ENCODE measurements at regions of chr1 and their contacts with region 1.

Region 1: GRCh38 chr1:21782868-21783678 is at the start of gene USP48:
- DNase-seq: peak; percentile 96 to 98
- H3K4me3 ChIP-seq: peak within 1 kb of the TSS; percentile 91
- H3K4me3 Mint-ChIP-seq: peak within 1 kb of the TSS; percentile 86
- H3K27ac Mint-ChIP-seq: peak within 1 kb of the TSS; percentile 98
- H3K4me1 ChIP-seq: no peaks in the 10 kb centered on the region
- H3K4me1 Mint-ChIP-seq: no peaks in the 10 kb centered on the region
- H3K27me3 ChIP-seq: no peaks in the 10 kb centered on the region
- H3K27me3 Mint-ChIP-seq: no peaks in the 10 kb centered on the region
- CTCF ChIP-seq: no peak
- total RNA-seq, gene USP48: 49.1 and 52.0 TPM in 2 replicates

Region 2: DNA sequence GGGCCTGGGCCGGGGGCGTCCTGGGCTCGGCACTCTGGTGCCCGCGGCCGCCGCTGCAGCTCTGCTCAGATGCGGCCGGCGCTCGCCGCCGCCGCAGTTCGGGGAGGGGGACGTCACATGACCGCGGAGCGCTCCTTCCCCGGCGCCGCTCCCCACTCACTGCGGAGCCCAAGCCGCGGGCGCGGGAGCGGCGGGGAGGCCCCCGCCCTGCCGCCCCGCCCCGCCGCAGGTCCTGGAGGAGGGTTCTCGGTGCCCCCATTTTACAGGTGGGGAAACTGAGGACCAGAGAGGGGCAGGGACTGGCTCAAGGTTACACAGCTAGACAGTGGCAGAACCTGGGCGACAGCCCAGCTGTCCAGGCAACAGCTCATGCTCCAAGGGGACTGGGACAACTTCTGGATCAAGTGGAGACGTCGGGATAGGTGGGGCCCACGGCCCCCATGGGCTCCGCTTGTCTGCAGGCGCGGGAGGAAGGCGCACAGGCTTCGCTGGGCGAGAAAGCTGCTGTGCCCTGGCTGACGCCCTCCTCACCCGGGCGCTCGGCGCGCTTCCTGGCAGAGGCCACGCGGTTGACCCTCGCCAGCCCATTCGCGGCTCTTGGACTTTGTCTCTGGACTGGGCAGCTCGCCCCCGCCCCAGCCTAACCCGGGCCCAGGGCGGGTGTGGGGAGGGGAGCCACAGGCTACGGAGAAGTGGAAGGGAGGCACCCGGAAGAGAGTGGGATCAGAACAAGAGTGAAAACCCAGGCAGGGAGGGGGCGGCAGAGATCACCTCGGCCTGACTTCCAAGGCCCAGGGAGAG is 113.6 kb before region 1 on chr1 and contains the start of gene RAP1GAP:
- CTCF ChIA-PET with region 1: no interaction called
- POLR2A ChIA-PET with region 1: interaction called, 4 read pairs
- intact Hi-C with region 1: loop called (anchors 10 kb)
- DNase-seq: peak; percentile 86 to 88
- H3K4me3 ChIP-seq: peak within 1 kb of the TSS; percentile 60
- H3K4me3 Mint-ChIP-seq: peak within 1 kb of the TSS; percentile 77
- H3K27ac Mint-ChIP-seq: peak within 1 kb of the TSS; percentile 50
- H3K4me1 ChIP-seq: peaks cover 9% of the 10 kb centered on the region; the same call in 1 of the 2 replicates
- H3K4me1 Mint-ChIP-seq: no peaks in the 10 kb centered on the region
- H3K27me3 ChIP-seq: no peaks in the 10 kb centered on the region
- H3K27me3 Mint-ChIP-seq: no peaks in the 10 kb centered on the region
- CTCF ChIP-seq: peak in 1 of 2 experiments; percentile 44
- total RNA-seq, gene RAP1GAP: 7.2 and 9.3 TPM in 2 replicates

Region 3: DNA sequence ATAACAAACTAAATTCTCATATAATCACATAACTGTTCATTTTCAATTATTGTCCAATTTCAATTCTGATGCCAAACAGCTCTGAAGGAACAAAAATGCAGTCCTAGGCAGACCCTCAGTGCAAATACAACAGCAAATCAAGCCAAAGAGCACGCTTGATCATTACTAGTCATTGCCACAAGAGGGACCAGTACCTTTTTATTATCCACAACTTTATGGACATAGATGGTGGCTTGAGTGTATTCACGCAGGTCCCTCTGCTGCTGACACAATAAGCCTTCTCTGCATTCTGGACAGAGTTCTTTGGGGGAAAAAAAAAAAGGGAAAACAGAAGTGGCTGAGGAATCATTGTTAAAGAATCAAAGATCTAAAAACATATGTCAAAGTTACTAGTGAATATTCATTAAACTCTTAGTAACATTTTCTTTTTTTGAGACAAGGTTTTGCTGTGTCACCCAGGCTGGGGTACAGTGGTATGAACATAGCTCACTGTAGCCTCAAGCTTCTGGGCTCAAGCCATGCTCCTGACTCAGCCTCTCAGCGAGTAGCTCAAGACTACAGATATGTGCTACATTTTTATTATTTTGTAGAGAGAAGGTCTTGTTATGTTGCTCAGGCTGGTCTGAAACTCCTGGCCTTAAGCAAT is 79.6 kb before region 1 on chr1:
- CTCF ChIA-PET with region 1: interaction called, 5 read pairs
- POLR2A ChIA-PET with region 1: no interaction called
- intact Hi-C with region 1: loop called (anchors 1 kb)
- DNase-seq: peak in 1 of 2 experiments; percentile 29
- H3K4me3 ChIP-seq: no peak overlapping the region
- H3K4me3 Mint-ChIP-seq: no peak overlapping the region
- H3K27ac Mint-ChIP-seq: peak overlapping the region; percentile 3
- H3K4me1 ChIP-seq: no peaks in the 10 kb centered on the region
- H3K4me1 Mint-ChIP-seq: peaks cover 14% of the 10 kb centered on the region
- H3K27me3 ChIP-seq: no peaks in the 10 kb centered on the region
- H3K27me3 Mint-ChIP-seq: no peaks in the 10 kb centered on the region
- CTCF ChIP-seq: peak; percentile 47 to 53